Activated CD4-positive, alpha-beta T cell treated with anti-CD3 and anti-CD28 coated beads, Interleukin-2, amount 10 ng/mL, durations not matched to agents 24 days and 14 days (primary cell): ENCODE measurements at regions of chr9 and their contacts with region 1.

Region 1: DNA sequence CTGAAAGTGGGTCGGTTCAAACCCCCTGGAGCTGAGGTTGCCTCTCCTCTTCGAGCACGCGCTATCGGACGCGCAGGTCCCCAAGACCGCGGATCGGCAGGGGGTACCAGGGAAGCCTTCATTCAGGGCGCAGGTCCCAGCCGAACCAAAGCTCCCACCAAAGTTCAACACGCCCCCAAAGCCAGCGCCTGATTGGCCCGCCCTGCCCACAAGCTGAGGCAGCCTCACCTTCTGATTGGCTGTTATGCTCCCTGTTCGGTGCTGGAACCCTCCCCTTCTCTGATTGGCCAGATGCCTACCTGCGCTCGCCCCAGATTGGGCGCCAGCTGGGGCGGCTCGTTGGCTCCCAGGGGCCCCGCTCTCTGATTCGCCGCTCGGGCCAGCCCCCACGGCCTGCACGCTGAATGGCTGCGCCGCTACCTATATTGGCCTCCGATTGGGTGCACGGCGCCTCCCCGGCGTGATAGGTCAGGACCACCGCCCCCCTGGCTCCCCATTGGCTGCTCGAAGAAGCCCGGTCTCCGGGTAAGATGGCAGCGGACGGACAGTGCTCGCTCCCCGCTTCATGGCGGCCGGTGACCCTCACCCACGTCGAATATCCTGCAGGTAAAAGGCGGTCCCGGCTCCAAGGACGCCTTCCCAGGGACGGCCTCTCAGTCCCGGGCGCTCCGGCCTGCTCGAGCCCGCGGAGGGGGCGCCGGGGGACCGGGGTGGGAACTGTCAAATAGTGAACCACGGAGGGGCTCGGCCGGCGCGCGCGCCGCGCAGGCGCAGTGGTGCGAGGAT is at the start of gene DOLPP1:
- DNase-seq: peak; percentile 100
- H3K4me3 Mint-ChIP-seq: peak within 1 kb of the TSS; percentile 95
- H3K27ac Mint-ChIP-seq: peak within 1 kb of the TSS; percentile 84
- H3K4me1 Mint-ChIP-seq: peaks cover 19% of the 10 kb centered on the region
- H3K27me3 Mint-ChIP-seq: no peaks in the 10 kb centered on the region
- total RNA-seq, gene DOLPP1: 24.7 and 24.8 TPM in 2 replicates

Region 2: DNA sequence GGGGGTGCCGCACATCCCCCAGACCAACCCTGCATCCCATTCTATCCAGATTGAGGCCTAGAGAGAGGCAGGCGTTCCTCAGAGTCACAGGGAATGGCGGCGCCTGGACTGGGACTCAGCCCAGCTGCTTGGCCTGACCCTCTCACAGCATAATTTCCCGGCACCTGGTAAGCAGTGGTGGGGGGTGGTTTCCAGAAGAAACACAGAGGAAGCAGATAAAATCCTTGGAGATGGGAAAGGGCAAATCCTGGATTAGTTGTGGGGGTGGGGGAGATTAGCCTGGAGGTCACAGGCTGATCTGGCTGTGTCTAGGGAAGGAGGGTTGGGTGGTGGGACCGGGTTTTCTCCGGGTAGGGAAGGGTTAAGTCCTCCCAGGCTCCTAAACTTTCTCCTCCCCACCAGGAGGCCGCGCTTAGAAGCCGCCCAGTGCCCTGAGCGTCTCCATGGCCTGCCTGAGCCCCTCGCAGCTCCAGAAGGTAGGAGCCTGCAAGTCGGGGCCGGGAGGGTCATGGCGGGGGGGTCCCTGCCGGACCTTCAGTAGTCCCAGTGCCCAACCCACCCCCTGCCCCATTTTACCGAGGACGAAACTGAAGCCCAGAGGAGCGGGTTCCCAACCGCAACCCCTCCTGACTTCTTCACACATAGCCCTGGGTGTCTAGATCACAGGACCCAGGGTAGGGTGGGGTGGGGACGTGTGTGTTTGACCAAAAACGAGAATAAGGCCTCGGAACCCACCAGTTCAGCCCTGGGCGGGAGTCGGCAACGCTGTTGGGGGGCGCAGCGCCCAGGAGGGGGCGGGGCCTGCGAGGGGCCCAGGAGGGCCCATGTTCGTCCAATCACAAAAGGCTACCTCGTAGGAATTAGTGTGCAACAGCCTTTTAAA is 158.7 kb before region 1 on chr9:
- intact Hi-C with region 1: no loop called
- DNase-seq: no peak
- H3K4me3 Mint-ChIP-seq: no peak overlapping the region
- H3K27ac Mint-ChIP-seq: no peak overlapping the region
- H3K4me1 Mint-ChIP-seq: peaks cover 6% of the 10 kb centered on the region
- H3K27me3 Mint-ChIP-seq: no peaks in the 10 kb centered on the region

Region 3: DNA sequence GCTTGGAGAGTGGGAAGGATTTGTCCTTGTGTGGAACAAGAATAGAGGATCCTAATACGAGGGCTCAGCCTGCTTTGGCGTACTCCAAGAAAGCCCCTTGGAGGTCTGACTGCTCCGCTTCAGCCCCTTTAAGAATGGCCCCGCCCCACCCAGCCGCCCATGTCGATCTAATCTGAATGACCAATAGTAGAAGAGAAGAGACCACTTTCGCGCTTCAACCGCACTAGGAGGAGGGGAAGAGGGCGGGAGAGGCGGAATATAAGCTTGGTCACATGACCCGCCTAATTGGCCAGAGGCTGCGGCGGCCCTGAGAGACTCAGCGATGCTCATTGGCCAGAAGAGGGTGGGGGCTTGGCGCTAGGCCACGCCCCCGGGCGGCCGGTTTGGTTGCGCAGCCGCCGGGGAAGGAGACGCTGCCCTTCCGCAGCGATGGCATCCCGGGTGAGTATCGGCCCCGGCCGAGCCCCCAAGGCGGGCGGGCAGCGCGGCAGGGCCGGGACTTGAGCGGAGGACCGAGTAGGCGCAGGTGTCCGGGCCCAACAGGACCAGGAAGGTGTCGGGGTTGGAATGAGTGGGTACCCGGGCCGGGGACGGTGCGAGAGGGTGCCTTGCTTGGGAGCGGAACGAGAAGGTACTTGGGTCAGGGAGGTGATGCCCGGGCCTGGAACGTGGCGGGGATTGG is 44.4 kb before region 1 on chr9 and contains the start of gene MIGA2:
- intact Hi-C with region 1: loop called (anchors 1 kb)
- DNase-seq: peak; percentile 98
- H3K4me3 Mint-ChIP-seq: peak within 1 kb of the TSS; percentile 98
- H3K27ac Mint-ChIP-seq: peak within 1 kb of the TSS; percentile 84
- H3K4me1 Mint-ChIP-seq: peaks cover 26% of the 10 kb centered on the region
- H3K27me3 Mint-ChIP-seq: peaks cover 2% of the 10 kb centered on the region
- total RNA-seq, gene MIGA2: 43.3 and 44.3 TPM in 2 replicates

Region 4: GRCh38 chr9:129110740-129111527 is 30.1 kb after region 1 on chr9 and contains the starts of genes CRAT and PTPA:
- intact Hi-C with region 1: loop called (anchors 1 kb)
- DNase-seq: peak; percentile 98
- H3K4me3 Mint-ChIP-seq: peak within 1 kb of the TSS; percentile 96
- H3K27ac Mint-ChIP-seq: peak within 1 kb of the TSS; percentile 96
- H3K4me1 Mint-ChIP-seq: peaks cover 29% of the 10 kb centered on the region
- H3K27me3 Mint-ChIP-seq: no peaks in the 10 kb centered on the region
- total RNA-seq, gene CRAT: 8.6 and 11.4 TPM in 2 replicates
- total RNA-seq, gene PTPA: 104 and 107 TPM in 2 replicates

Region 5: DNA sequence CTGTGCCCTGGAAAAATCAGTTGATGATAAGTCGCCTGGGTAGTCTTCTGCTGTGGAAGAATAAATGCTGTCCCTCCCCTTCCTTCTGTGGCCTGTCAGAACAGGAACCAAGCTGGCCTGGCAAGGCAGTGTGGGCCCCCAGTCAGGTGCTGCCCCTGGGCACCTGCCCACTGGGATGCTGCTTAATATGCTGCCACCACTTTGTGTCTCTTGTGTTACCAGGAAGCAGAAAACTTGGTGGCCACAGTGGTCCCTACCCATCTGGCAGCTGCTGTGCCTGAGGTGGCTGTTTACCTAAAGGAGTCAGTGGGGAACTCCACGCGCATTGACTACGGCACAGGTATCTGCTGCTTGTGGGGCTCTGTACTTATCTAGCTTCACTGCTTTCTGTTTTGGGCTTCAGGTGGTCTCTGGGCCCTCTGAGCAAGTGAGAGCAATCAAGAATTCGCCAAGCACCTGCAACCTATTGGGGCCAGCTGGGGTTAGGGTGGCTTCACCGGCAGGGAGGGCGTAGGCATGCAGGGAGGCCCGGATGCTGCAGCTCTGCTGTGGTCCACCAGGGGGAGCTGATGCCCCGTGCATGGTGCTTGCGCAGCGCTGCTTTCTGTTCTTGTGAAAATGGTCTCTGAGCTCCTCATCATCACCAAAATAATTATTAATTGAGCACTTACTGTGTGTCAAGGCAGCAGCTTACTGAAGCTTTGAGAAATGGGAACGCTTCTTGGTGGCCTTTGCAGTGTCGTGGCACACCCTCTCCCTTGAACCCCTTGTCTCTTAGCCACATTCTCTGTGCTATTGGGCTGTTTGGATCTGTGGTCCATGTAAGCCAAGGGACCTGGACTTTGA is 50.7 kb after region 1 on chr9:
- intact Hi-C with region 1: no loop called
- DNase-seq: peak; percentile 96
- H3K4me3 Mint-ChIP-seq: no peak overlapping the region
- H3K27ac Mint-ChIP-seq: no peak overlapping the region
- H3K4me1 Mint-ChIP-seq: peaks cover 5% of the 10 kb centered on the region
- H3K27me3 Mint-ChIP-seq: no peaks in the 10 kb centered on the region